Motor neuron (in vitro differentiated cells): ENCODE measurements at regions of chr9 and their contacts with region 1.

Region 1: DNA sequence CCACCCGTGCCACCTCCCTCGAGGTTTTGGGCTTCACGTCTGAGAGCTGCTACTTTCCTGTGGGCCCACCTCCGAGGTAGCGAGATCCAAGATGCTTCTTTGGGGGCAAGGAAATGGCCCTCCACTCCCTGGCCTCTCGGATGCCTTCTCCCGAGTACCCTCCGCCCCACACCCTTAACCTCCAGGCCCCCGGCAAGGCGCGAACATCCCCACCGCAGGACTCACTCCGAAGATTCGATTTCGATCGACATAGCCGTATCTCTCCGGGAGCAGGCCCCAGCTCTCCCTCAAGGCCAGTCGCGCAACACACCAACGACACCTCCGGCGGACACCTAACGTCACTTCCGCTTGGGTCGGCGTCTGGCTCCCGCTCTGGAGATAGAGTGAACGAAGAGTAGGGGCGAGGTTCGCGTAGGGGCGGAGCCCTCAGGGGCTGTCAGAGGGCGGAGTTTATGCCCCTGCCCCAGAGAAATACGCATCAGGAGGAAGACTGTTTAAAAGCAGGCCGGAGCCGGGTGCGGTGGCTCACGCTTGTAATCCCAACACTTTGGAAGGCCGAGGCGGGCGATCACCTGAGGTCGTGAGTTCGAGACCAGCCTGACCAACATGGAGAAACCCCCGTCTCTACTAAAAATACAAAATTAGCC is at the start of gene SMU1:
- ATAC-seq: peak; percentile 92 to 99 (median 97)
- H3K4me3 ChIP-seq: peak within 1 kb of the TSS; percentile 74 to 91 (median 83)
- H3K27ac ChIP-seq: peak within 1 kb of the TSS; percentile 75 to 94
- H3K4me1 ChIP-seq: peaks cover 3 to 10% of the 10 kb centered on the region in 2 donors
- total RNA-seq, gene SMU1: 17.5 to 30.2 (median 27.1) TPM

Region 2: DNA sequence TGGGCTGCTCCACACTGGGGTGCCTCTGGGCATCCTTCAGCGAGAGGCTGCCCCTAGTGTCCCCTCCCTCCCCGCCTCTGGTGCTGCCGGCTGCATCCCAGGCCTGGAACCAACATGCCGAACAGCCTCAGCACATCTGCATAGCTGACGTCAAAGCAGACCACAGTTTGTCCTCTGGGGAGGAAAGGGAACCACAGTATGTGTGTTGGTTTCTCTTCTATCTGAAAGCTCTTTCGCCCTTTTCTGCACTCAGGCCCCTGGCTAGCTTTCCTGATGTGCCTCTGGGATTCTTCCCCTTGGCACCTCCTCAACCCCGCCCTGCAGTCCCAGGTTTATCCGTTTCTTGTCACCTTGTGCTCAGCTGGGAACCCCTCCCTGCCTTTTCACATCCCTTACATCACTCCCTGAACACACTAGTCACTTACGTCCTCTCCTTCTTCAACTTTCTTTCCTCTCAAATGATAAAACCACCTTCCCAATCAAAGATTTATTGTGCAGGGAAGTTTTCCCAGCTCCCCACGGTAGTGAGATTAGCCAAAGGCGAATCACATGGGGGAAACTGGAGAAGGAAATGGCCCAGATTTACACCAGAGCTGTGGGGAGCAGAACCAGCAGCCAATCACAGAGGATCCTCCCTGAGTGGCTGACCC is 126.2 kb after region 1 on chr9:
- in situ Hi-C with region 1: loop called in 2 of 9 experiments (anchors 25 kb)
- ATAC-seq: peak in 3 of 8 experiments; percentile 83 to 98 (median 84)
- H3K4me3 ChIP-seq: no peak overlapping the region
- H3K27ac ChIP-seq: no peak overlapping the region
- H3K4me1 ChIP-seq: no peaks in the 10 kb centered on the region

Region 3: GRCh38 chr9:33211695-33212393 is 135.4 kb after region 1 on chr9:
- in situ Hi-C with region 1: loop called in 3 of 9 experiments (anchors 10 to 25 kb)
- ATAC-seq: peak in 5 of 8 experiments; percentile 18 to 65 (median 55)
- H3K4me3 ChIP-seq: no peak overlapping the region
- H3K27ac ChIP-seq: no peak overlapping the region
- H3K4me1 ChIP-seq: no peaks in the 10 kb centered on the region

Region 4: GRCh38 chr9:33225319-33226149 is 149.1 kb after region 1 on chr9:
- in situ Hi-C with region 1: loop called in 6 of 9 experiments (anchors 5 to 25 kb)
- ATAC-seq: peak; percentile 32 to 73 (median 60)
- H3K4me3 ChIP-seq: no peak overlapping the region
- H3K27ac ChIP-seq: no peak overlapping the region
- H3K4me1 ChIP-seq: peaks cover 0 to 3% of the 10 kb centered on the region in 2 donors

Region 5: DNA sequence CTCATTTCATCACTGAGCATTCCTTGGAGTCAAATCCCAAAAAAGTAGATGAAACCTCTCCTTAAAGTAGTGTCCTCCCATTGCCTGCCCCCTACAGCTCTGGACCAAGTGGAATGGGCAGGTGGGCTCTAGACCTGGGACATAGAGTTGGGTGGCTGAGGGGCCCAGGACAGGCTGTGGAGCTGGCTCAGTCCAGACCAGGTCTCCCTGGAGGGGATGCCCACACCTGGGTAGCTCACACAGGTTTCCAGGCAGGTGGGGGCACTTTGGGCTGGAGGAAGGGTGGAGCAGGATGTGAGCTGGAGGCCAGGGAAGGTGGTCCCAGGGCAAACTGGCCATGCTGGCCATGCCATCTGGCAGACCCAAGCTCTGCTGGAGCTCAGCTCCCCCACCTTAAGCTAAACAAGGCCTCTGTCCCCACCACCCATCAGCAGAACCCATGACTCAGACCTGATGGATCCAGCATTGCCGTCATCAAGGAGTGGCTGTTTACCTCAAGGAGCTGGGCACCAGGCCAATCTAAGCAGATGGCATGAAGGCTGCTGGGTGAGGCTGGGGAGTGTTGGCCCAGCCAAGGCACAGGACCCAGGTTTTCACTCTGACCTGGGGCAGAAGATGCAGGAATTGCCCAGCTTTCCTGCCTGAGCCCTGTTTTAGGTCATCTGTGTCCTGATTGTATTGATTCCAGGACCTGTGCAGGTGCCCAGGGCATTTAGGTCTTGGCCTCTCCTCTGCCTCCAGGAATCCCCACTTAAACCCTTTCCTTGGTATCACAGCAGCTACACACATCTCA is 157.4 kb after region 1 on chr9:
- in situ Hi-C with region 1: loop called in 4 of 9 experiments (anchors 5 to 25 kb)
- ATAC-seq: peak in 4 of 8 experiments; percentile 18 to 95 (median 94)
- H3K4me3 ChIP-seq: no peak overlapping the region
- H3K27ac ChIP-seq: no peak overlapping the region
- H3K4me1 ChIP-seq: no peaks in the 10 kb centered on the region

Region 6: DNA sequence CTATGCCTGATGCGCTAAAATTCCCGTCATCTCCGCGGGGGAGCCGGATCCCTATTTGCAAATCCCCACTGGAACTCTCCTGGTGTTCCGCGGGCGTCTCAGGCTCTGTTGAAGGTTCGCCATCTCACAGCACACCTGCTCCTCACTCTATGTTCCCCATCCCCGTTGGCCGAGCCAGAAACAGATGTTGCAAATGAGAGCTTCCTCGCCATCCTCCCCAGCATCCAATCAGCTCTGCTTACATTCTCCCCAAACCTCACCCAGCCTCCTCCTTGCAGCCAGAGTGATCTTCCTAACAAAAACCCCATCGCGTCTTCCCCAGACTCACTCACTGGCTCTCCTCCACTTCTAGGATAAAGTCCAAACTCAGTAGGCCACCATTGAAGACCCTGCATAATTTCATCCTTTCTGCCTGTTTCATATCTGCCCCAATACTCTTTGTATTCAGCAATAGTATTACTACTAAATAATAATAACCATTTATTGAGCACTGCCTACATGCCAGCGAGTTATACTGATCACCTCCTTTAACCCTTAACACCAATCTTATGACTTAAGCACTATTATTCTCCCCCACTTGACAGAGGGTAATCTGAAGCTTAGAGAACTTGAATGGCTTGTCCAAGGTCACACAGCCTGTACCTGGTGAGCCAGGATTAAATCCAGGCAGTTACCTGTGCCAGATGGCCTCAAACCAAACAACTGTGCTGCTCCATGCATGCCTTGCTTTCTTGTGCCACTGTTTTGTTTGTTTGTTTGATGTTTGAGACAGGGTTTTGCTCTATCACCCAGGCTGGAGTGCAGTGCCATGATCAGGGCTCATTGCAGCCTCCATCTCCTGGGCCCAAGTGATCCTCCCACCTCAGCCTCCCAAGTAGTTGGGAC is 311.9 kb after region 1 on chr9:
- in situ Hi-C with region 1: no loop called
- ATAC-seq: no peak
- H3K4me3 ChIP-seq: no peak overlapping the region
- H3K27ac ChIP-seq: no peak overlapping the region
- H3K4me1 ChIP-seq: peaks cover 9 to 16% of the 10 kb centered on the region in 2 donors